Activated CD8-positive, alpha-beta memory T cell treated with anti-CD3 and anti-CD28 coated beads, Interleukin-2, amount 10 ng/mL, durations not matched to agents 7 days and 5 days (primary cell): ENCODE measurements at regions of chr14 and their contacts with region 1.

Region 1: GRCh38 chr14:75293920-75294642 is 15.5 kb downstream of the FOS start:
- DNase-seq: peak; percentile 95
- ATAC-seq: peak; percentile 90
- H3K4me3 Mint-ChIP-seq: peak overlapping the region; percentile 76
- H3K27ac Mint-ChIP-seq: peak overlapping the region; percentile 81
- H3K4me1 Mint-ChIP-seq: peaks cover 21% of the 10 kb centered on the region
- H3K27me3 Mint-ChIP-seq: peaks cover 22% of the 10 kb centered on the region

Region 2: GRCh38 chr14:75126679-75127473 is 167.2 kb before region 1 on chr14 and contains the start of gene NEK9:
- CTCF ChIA-PET with region 1: interaction called, 216 read pairs
- DNase-seq: peak; percentile 94
- ATAC-seq: peak; percentile 96
- H3K4me3 Mint-ChIP-seq: peak within 1 kb of the TSS; percentile 98
- H3K27ac Mint-ChIP-seq: peak within 1 kb of the TSS; percentile 98
- H3K4me1 Mint-ChIP-seq: peaks cover 41% of the 10 kb centered on the region
- H3K27me3 Mint-ChIP-seq: no peaks in the 10 kb centered on the region
- total RNA-seq, gene NEK9: 83.0 to 86.4 TPM

Region 3: DNA sequence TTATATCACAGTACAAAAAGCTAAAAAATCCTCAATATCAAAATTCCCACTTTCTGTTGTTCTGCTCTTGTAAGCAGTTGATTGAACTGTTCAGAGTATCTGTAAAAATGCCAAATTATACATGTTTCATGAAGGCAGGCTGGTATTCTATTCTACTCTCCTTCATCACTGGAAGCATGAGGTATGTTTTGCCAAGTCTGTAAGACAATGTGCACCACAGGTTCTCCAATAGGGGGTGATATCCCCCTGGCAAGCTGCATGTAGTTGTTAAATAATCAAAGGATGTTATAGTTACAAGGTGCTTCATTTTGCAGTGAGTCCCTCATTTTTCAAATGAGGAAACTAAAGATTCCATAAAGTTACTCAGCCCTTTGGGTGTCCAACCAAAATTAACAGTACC is 152.1 kb before region 1 on chr14:
- CTCF ChIA-PET with region 1: interaction called, 138 read pairs
- DNase-seq: peak; percentile 47
- ATAC-seq: peak; percentile 52
- H3K4me3 Mint-ChIP-seq: no peak overlapping the region
- H3K27ac Mint-ChIP-seq: peak overlapping the region; percentile 20
- H3K4me1 Mint-ChIP-seq: peaks cover 62% of the 10 kb centered on the region
- H3K27me3 Mint-ChIP-seq: no peaks in the 10 kb centered on the region

Region 4: DNA sequence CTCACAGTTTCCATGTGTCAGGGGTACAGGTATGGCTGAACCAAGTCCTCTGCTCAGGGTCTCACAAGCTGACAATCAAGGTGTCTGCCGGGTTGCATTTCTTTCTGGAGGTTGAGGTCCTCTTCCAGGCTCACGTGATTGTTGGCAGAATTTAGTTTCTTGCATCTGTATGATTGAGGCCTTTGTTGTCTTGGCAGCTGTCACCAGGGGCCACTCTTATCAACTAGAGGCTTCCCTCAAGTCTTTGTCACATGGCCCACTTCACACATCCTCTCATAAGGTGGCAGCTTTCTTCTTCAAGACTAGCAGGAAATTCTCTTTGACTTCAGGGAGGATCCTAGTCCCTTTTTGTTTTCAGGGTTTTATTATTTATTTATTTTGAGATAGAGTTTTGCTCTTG is 61.5 kb before region 1 on chr14:
- CTCF ChIA-PET with region 1: interaction called, 13 read pairs
- DNase-seq: peak; percentile 50
- ATAC-seq: peak; percentile 47
- H3K4me3 Mint-ChIP-seq: no peak overlapping the region
- H3K27ac Mint-ChIP-seq: no peak overlapping the region
- H3K4me1 Mint-ChIP-seq: peaks cover 44% of the 10 kb centered on the region
- H3K27me3 Mint-ChIP-seq: peaks cover 23% of the 10 kb centered on the region

Region 5: GRCh38 chr14:75249251-75249957 is 44.7 kb before region 1 on chr14:
- CTCF ChIA-PET with region 1: interaction called, 26 read pairs
- DNase-seq: peak; percentile 96
- ATAC-seq: peak; percentile 84
- H3K4me3 Mint-ChIP-seq: no peak overlapping the region
- H3K27ac Mint-ChIP-seq: peak overlapping the region; percentile 70
- H3K4me1 Mint-ChIP-seq: peaks cover 46% of the 10 kb centered on the region
- H3K27me3 Mint-ChIP-seq: peaks cover 53% of the 10 kb centered on the region

Region 6: GRCh38 chr14:75258615-75259466 is 35.2 kb before region 1 on chr14:
- CTCF ChIA-PET with region 1: interaction called, 14 read pairs
- DNase-seq: peak; percentile 99
- ATAC-seq: peak; percentile 91
- H3K4me3 Mint-ChIP-seq: peak overlapping the region; percentile 81
- H3K27ac Mint-ChIP-seq: peak overlapping the region; percentile 95
- H3K4me1 Mint-ChIP-seq: peaks cover 18% of the 10 kb centered on the region
- H3K27me3 Mint-ChIP-seq: peaks cover 54% of the 10 kb centered on the region

Region 7: GRCh38 chr14:75283162-75283881 is 10.8 kb before region 1 on chr14:
- CTCF ChIA-PET with region 1: interaction called, 23 read pairs
- DNase-seq: no peak
- ATAC-seq: peak; percentile 4
- H3K4me3 Mint-ChIP-seq: no peak overlapping the region
- H3K27ac Mint-ChIP-seq: no peak overlapping the region
- H3K4me1 Mint-ChIP-seq: peaks cover 21% of the 10 kb centered on the region
- H3K27me3 Mint-ChIP-seq: peaks cover 65% of the 10 kb centered on the region